Ovary (tissue), 10 donors: ENCODE measurements at regions of chr2 and their contacts with region 1.

Region 1: GRCh38 chr2:31586230-31586629 is 5.5 kb upstream of the SRD5A2 start:
- DNase-seq: no peak
- H3K4me3 ChIP-seq: no peak overlapping the region
- H3K27ac ChIP-seq: no peak overlapping the region
- H3K4me1 ChIP-seq: no peaks in the 10 kb centered on the region
- H3K27me3 ChIP-seq: no peaks in the 10 kb centered on the region
- CTCF ChIP-seq: no peak
- EP300 ChIP-seq: no peak
- POLR2A ChIP-seq: no peak

Region 2: GRCh38 chr2:29644949-29645348 is 1941.3 kb before region 1 on chr2:
- intact Hi-C with region 1: loop called in 1 of 4 experiments (anchors 5 kb)
- DNase-seq: no peak
- H3K4me3 ChIP-seq: no peak overlapping the region
- H3K27ac ChIP-seq: no peak overlapping the region
- H3K4me1 ChIP-seq: no peaks in the 10 kb centered on the region
- H3K27me3 ChIP-seq: no peaks in the 10 kb centered on the region
- CTCF ChIP-seq: no peak
- EP300 ChIP-seq: no peak
- POLR2A ChIP-seq: no peak

Region 3: DNA sequence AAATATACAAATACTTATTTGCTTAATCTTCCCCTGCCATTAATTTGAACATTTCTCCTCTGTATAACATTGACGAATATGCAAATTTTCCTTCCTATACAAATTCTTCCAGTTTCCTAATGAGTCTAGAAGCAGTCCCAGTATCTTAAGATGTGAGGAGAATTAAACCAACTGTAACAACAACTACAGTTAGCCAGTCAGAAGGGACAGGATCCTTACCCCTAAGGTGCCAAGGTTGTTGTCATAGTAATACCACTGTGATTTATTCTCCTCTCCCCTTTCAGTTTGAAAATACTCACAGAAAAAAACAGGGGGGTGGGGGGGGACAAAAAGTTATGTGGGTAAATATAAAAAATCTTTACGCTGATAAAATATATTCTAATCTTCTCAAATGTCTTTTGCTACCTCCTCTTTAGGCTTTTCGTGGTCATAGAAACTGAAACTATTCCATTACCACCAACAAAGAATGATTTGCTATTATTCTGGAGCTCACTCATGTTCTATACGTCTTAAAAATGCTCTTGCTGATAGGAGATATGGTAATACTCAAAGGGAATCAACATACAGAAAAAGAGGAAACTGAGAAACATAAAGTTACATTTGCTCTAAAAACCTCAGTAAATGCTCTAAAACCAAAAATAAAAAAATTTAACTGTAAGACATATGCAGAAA is 317.0 kb after region 1 on chr2:
- intact Hi-C with region 1: no loop called
- DNase-seq: no peak
- H3K4me3 ChIP-seq: no peak overlapping the region
- H3K27ac ChIP-seq: no peak overlapping the region
- H3K4me1 ChIP-seq: no peaks in the 10 kb centered on the region
- H3K27me3 ChIP-seq: no peaks in the 10 kb centered on the region
- CTCF ChIP-seq: no peak
- EP300 ChIP-seq: no peak
- POLR2A ChIP-seq: no peak